ENCODE measurements at regions of chr17 and their contacts with region 1.

Region 1: GRCh38 chr17:4623249-4623648 is 18.2 kb downstream of the ALOX15 start:
- DNase-seq: no peak
- H3K4me3 ChIP-seq: no peak overlapping the region
- H3K27ac ChIP-seq: no peak overlapping the region
- H3K4me1 ChIP-seq: no peaks in the 10 kb centered on the region
- H3K27me3 ChIP-seq: no peaks in the 10 kb centered on the region
- CTCF ChIP-seq: no peak
- POLR2A ChIP-seq: no peak

Region 2: GRCh38 chr17:4573669-4574068 is 49.6 kb before region 1 on chr17:
- intact Hi-C with region 1: loop called (anchors 5 kb)
- DNase-seq: peak; percentile 89
- H3K4me3 ChIP-seq: no peak overlapping the region
- H3K27ac ChIP-seq: no peak overlapping the region
- H3K4me1 ChIP-seq: peaks cover 21% of the 10 kb centered on the region
- H3K27me3 ChIP-seq: no peaks in the 10 kb centered on the region
- CTCF ChIP-seq: no peak
- POLR2A ChIP-seq: no peak

Region 3: DNA sequence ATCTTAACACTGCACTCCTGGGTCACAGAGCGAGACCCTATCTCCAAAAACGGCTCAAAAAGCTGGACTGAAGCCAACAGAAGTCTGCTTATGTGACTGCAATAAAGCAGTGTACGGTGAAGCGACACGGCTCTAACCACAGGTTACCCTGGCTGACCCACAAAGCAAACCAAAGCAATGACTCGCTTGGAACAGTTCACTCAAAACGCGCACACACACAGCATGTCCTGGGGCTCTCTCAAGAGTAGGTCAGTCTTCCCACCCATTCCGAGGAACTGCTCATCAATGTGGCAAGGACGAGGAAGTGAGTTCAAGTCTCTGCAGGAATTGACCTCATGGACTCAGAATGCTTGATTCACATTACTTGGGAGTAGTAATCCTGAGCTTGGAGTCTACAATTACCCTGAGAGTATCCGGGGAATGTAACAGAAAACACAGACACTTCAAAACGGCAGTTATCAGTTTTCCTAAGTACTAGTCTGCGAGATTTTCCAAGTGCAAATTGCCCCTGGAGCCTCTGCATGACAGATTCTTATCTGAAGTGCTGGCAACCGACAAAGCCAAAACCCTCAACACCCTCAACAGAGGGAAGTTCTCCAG is 55.3 kb after region 1 on chr17:
- intact Hi-C with region 1: no loop called
- DNase-seq: no peak
- H3K4me3 ChIP-seq: no peak overlapping the region
- H3K27ac ChIP-seq: no peak overlapping the region
- H3K4me1 ChIP-seq: peaks cover 9% of the 10 kb centered on the region
- H3K27me3 ChIP-seq: no peaks in the 10 kb centered on the region
- CTCF ChIP-seq: no peak
- POLR2A ChIP-seq: no peak